Activated CD8-positive, alpha-beta T cell treated with anti-CD3 and anti-CD28 coated beads, Interleukin-2, amount 10 ng/mL, durations not matched to agents 7 days and 5 days (primary cell): ENCODE measurements at regions of chr9 and their contacts with region 1.

Region 1: DNA sequence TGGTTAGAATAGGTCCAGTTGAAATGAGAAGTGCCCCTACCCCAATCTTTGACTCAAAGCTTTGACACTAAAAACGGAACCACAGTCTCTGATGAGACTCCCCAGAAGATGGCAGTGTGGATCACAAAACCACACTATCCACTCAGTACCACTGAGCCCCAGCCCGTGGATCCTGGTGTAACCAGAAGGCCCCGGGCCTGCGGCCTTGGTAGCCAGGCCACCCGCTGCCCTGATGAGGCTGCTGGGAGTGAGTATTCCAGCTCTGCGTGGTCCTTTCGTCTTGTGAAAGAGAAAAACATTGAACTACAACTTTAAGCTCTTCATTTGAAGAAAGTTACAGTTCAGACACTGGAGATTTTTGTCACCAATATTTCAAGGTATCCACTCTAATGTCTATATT is 42.2 kb upstream of the FBP1 start:
- DNase-seq: peak; percentile 62
- ATAC-seq: peak; percentile 77
- H3K4me3 Mint-ChIP-seq: no peak overlapping the region
- H3K27ac Mint-ChIP-seq: no peak overlapping the region
- H3K4me1 Mint-ChIP-seq: no peaks in the 10 kb centered on the region
- H3K27me3 Mint-ChIP-seq: peaks cover 30% of the 10 kb centered on the region

Region 2: DNA sequence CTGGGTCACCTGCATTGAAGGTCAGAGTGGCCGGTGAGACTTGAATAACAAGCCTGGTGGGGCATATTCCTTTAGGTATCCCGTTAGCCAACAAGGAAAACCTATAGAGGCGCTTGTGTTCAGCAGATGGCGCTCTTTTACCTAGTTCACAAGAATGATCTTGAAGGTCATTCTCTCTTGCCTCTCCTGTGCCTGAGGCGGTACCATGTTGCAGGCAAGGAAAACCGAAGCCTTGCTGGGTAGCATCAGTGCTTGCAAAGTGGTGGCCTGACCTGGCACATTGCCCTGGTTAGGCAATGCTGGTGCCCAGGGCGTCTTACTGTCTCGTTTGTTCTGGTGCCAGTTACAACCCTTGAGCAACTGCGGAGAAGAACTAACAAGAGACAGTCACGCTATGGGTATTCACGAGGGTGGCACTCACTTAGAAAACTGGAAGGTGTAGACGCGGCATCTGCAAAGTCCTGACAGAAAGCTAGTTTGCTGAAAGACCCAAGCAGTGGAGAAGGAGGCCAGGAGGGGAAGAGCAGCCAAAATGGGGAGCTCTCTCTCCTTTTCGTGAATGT is 101.7 kb after region 1 on chr9:
- CTCF ChIA-PET with region 1: interaction called, 10 read pairs
- POLR2A ChIA-PET with region 1: no interaction called
- DNase-seq: peak; percentile 57
- ATAC-seq: no peak
- H3K4me3 Mint-ChIP-seq: no peak overlapping the region
- H3K27ac Mint-ChIP-seq: no peak overlapping the region
- H3K4me1 Mint-ChIP-seq: peaks cover 5% of the 10 kb centered on the region
- H3K27me3 Mint-ChIP-seq: no peaks in the 10 kb centered on the region

Region 3: DNA sequence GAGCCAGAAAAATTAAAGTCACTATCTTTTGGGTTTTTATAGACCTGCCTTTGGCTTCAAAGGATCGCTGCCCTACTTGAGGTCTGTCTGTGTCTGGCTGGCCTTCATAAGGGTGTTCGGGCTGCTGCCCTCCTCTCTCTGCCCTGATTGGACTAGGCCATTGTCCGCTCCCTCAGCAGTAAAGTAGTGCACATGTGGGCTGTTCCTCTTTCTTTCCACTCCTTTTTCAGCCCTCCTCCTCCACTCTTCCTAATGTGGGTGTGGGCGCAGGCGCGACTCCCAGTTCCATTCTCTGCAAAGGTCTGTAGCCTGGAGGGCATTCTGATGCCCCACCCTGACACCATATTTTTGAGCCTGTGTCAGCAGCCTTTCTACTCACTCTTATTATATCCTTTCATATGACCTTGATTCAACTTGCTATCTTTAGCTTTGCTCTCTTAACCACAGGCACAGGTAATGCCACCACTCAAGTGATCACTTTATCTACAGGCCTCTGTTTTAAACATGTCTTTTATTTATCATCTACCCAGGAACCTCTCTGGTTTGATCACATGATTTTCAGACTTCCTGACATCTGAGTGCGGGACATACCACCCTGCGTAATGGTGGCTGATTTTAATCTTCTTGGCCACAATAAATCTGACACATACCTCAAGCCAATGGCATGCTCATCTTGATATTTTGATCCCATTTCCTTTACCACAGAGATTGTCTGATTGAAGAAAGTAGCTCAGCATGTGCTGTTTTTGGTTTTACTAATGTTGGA is 189.5 kb after region 1 on chr9:
- CTCF ChIA-PET with region 1: no interaction called
- POLR2A ChIA-PET with region 1: no interaction called
- DNase-seq: peak; percentile 61
- ATAC-seq: peak; percentile 90
- H3K4me3 Mint-ChIP-seq: no peak overlapping the region
- H3K27ac Mint-ChIP-seq: peak overlapping the region; percentile 74
- H3K4me1 Mint-ChIP-seq: peaks cover 16% of the 10 kb centered on the region
- H3K27me3 Mint-ChIP-seq: peaks cover 24% of the 10 kb centered on the region

Region 4: DNA sequence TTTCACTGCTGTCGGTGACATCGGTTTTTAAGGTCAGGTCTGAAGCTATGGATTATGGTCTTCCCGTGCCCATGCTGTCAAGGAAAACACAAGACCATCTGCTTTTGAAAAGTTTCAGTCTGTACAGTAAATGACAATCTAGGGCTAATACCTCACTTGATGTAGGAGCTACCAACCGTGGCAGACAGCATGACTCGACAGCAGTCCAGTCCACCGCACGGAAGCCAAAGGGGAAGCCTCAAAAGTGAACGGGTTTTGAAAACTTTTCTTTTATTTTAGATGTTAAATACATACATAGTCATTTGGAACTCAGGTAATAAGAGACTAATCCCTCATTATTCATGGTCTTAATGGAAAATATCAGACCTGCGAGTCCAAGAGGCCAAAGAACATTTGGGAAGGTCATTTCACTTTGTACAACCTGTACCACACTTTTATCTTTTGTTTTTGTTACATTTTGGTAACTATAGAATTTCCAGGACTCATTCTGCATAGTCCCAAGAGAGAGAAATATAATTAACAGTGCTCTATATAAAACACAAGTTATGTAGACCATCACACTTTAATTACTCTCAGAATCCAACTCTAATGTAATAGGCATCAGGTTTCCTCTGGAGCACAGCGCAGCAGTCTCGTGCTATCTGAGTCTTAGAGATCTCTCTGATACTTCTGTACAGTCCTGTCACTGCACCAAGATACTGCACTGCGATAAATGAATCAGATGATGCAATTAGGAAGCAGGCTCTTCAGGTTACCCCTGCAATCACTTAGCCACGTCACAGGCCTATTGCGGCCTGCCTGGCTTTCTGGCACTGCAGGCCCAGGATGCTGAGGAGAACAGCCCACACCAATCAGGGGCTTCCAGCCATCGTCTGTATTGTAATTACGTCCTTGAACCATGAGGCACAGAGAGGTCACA is 451.2 kb after region 1 on chr9:
- CTCF ChIA-PET with region 1: interaction called, 194 read pairs
- POLR2A ChIA-PET with region 1: no interaction called
- DNase-seq: no peak
- ATAC-seq: no peak
- H3K4me3 Mint-ChIP-seq: no peak overlapping the region
- H3K27ac Mint-ChIP-seq: no peak overlapping the region
- H3K4me1 Mint-ChIP-seq: no peaks in the 10 kb centered on the region
- H3K27me3 Mint-ChIP-seq: no peaks in the 10 kb centered on the region